Activated naive CD4-positive, alpha-beta T cell treated with anti-CD3 and anti-CD28 coated beads for 36 hours (primary cell): ENCODE measurements at regions of chr15 and their contacts with region 1.

Region 1: DNA sequence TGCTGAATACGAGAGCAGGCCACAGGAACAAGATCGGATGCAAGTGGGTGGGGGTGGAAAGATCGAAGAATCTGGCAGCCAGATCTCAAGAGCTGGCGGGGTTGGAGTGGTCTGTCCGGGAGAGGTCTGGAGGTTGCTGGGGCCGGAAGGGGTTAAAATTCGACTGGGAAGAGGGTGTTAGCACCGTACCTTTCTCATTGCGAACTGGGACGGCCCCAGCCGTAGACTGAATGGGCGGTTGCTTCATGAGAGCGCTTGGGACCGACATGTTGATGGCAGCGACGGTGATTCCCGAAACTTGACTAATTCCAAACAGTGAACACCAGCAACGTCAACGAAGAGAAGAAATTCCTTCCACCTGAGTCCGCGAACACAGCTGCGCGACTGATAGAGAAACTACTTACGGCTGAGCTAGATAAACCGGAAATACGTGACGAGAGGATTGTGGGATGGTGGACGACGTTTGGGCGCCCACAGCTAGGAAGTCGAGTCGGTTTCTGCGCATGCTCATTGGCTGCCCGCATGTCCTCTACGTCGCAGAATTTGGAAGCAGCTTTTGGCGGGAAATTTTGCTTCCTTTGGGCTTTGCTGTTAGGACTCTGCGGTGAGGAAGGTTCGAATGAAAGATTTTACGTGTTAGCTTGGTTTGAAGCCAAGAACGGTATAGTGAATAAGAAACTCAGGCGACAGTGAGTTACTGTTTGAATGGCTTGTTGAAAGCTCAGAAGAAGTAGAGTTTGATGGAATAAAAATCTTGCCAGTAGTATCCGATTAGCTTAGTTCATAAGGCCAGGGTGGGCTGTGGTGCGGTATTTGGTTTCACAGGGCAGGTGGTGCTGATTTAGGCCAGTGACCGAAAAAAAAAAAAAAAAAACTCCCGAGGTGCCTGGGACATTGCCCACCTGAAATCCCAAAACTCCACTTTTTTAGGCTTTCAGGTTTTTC is at the start of gene MFAP1:
- DNase-seq: peak; percentile 96
- H3K4me3 Mint-ChIP-seq: peak within 1 kb of the TSS; percentile 98
- H3K27ac Mint-ChIP-seq: peak within 1 kb of the TSS; percentile 98
- H3K4me1 Mint-ChIP-seq: peaks cover 52% of the 10 kb centered on the region
- H3K27me3 Mint-ChIP-seq: no peaks in the 10 kb centered on the region
- total RNA-seq, gene MFAP1: 28.5 to 28.7 TPM

Region 2: GRCh38 chr15:43749690-43750345 is 74.8 kb before region 1 on chr15:
- CTCF ChIA-PET with region 1: interaction called, 3 read pairs
- intact Hi-C with region 1: loop called (anchors 1 kb)
- DNase-seq: peak; percentile 71
- H3K4me3 Mint-ChIP-seq: peak overlapping the region; percentile 74
- H3K27ac Mint-ChIP-seq: peak overlapping the region; percentile 89
- H3K4me1 Mint-ChIP-seq: peaks cover 53% of the 10 kb centered on the region
- H3K27me3 Mint-ChIP-seq: no peaks in the 10 kb centered on the region

Region 3: GRCh38 chr15:43791993-43792760 is 32.4 kb before region 1 on chr15 and contains the start of gene SERF2:
- CTCF ChIA-PET with region 1: interaction called, 3 read pairs
- intact Hi-C with region 1: loop called (anchors 1 kb)
- DNase-seq: peak; percentile 100
- H3K4me3 Mint-ChIP-seq: peak within 1 kb of the TSS; percentile 90
- H3K27ac Mint-ChIP-seq: peak within 1 kb of the TSS; percentile 92
- H3K4me1 Mint-ChIP-seq: peaks cover 39% of the 10 kb centered on the region
- H3K27me3 Mint-ChIP-seq: no peaks in the 10 kb centered on the region
- total RNA-seq, gene SERF2: 781 to 808 TPM

Region 4: GRCh38 chr15:43896543-43896942 is 72.0 kb after region 1 on chr15:
- CTCF ChIA-PET with region 1: no interaction called
- intact Hi-C with region 1: no loop called
- DNase-seq: no peak
- H3K4me3 Mint-ChIP-seq: no peak overlapping the region
- H3K27ac Mint-ChIP-seq: no peak overlapping the region
- H3K4me1 Mint-ChIP-seq: no peaks in the 10 kb centered on the region
- H3K27me3 Mint-ChIP-seq: no peaks in the 10 kb centered on the region

Region 5: GRCh38 chr15:44195151-44195740 is 370.7 kb after region 1 on chr15 and contains the start of gene FRMD5:
- CTCF ChIA-PET with region 1: no interaction called
- intact Hi-C with region 1: loop called (anchors 10 kb)
- DNase-seq: peak; percentile 94
- H3K4me3 Mint-ChIP-seq: peak within 1 kb of the TSS; percentile 84
- H3K27ac Mint-ChIP-seq: no peak within 1 kb of the TSS
- H3K4me1 Mint-ChIP-seq: peaks cover 18% of the 10 kb centered on the region
- H3K27me3 Mint-ChIP-seq: peaks cover 28% of the 10 kb centered on the region
- total RNA-seq, gene FRMD5: 0.37 to 0.50 TPM

Region 6: GRCh38 chr15:44308415-44308814 is 483.8 kb after region 1 on chr15:
- CTCF ChIA-PET with region 1: no interaction called
- intact Hi-C with region 1: loop called (anchors 5 kb)
- DNase-seq: peak; percentile 30
- H3K4me3 Mint-ChIP-seq: peak overlapping the region; percentile 43
- H3K27ac Mint-ChIP-seq: peak overlapping the region; percentile 81
- H3K4me1 Mint-ChIP-seq: peaks cover 37% of the 10 kb centered on the region
- H3K27me3 Mint-ChIP-seq: no peaks in the 10 kb centered on the region

Region 7: GRCh38 chr15:45402162-45402954 is 1577.8 kb after region 1 on chr15:
- CTCF ChIA-PET with region 1: no interaction called
- intact Hi-C with region 1: loop called (anchors 10 kb)
- DNase-seq: peak; percentile 98
- H3K4me3 Mint-ChIP-seq: peak overlapping the region; percentile 99
- H3K27ac Mint-ChIP-seq: peak overlapping the region; percentile 89
- H3K4me1 Mint-ChIP-seq: peaks cover 27% of the 10 kb centered on the region
- H3K27me3 Mint-ChIP-seq: no peaks in the 10 kb centered on the region